ENCODE measurements at regions of chr18 and their contacts with region 1.

Region 1: DNA sequence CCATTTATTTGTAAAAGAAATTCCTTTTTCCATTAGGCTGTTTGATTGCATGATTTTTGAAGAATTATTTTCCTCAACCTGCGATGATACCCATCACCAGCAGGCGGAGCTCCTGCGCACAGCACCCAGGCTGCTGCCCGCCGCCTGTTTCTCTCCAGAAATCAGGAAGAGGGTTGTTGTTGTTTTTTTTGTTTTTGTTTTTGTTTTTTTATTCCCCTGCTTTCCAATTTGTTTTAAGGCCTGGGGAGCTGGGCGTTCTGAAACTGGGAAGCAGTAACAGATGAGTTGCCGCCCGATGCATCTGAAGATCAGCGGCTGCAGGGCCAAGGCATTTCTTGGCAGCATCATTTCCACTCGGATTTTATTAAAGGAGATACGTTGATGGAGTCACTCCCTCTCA is 132.1 kb downstream of the MBP start:
- DNase-seq: peak; percentile 62
- H3K4me3 Mint-ChIP-seq: no peak overlapping the region
- H3K27ac Mint-ChIP-seq: no peak overlapping the region
- H3K4me1 Mint-ChIP-seq: peaks cover 17% of the 10 kb centered on the region
- H3K27me3 Mint-ChIP-seq: no peaks in the 10 kb centered on the region

Region 2: GRCh38 chr18:76658627-76659026 is 341.9 kb before region 1 on chr18:
- CTCF ChIA-PET with region 1: no interaction called
- POLR2A ChIA-PET with region 1: no interaction called
- intact Hi-C with region 1: no loop called
- DNase-seq: peak; percentile 46
- H3K4me3 Mint-ChIP-seq: no peak overlapping the region
- H3K27ac Mint-ChIP-seq: no peak overlapping the region
- H3K4me1 Mint-ChIP-seq: peaks cover 15% of the 10 kb centered on the region
- H3K27me3 Mint-ChIP-seq: peaks cover 34% of the 10 kb centered on the region

Region 3: DNA sequence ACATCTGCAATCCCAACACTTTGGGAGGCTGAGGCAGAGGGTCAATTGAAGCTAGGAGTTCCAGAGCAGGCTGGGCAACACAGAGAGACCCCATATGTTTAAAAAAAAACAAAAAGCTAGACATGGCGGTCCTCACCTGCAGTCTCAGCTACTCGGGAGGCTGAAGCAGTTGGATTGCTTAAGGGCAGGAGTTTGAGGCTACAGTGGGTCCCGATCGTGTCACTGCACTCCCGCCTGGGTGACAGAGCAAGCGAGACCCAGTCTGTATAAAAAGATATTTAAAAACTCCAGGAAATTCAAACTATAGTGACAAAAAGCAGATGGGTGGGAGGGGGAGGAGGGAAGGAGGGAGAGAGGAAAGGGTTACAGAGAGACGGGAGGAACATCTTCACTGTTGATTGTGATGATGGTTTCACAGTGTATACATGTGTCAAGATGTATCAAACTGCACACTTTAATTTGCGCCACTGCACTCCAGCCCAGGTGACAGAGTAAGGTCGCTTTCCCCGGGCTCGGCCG is 179.1 kb before region 1 on chr18:
- CTCF ChIA-PET with region 1: no interaction called
- POLR2A ChIA-PET with region 1: no interaction called
- intact Hi-C with region 1: no loop called
- DNase-seq: no peak
- H3K4me3 Mint-ChIP-seq: peak overlapping the region; percentile 89
- H3K27ac Mint-ChIP-seq: peak overlapping the region; percentile 87
- H3K4me1 Mint-ChIP-seq: peaks cover 46% of the 10 kb centered on the region
- H3K27me3 Mint-ChIP-seq: no peaks in the 10 kb centered on the region

Region 4: DNA sequence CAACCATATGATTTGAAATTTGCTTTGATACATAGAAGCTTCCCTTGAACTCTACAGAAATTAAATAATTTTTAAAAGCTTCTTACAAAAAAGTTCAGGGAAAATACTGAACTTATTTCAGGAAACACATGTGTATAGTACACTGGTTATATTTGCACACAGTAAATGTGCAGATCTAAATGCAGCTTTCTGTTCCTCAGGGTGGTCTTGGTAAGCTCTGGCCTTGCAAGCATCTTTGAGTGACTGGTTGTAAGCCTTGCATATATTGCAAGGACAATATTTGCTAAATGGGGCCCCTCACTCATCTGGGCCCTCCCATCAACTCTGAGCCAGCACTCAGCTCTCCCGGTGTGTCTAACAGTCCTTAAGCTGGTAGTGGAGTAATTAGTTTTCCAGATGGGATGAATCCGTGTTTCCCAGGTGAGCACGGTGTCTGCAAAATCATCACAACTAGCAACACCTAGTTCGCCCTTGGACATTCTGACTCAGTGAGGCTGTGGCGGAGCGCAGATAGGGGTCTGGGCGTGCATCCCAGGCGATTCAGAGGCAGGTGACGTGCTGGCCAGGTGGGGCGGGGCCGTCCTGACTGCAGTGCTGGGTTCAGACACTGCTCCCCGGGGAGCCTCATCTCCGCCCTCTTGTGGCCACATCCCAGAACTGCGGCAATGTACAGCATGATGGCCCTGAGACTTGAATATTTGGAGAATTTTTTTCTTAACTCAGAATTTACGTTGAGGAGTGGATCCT is 17.5 kb before region 1 on chr18:
- CTCF ChIA-PET with region 1: interaction called, 27 read pairs
- POLR2A ChIA-PET with region 1: no interaction called
- intact Hi-C with region 1: no loop called
- DNase-seq: peak; percentile 94
- H3K4me3 Mint-ChIP-seq: no peak overlapping the region
- H3K27ac Mint-ChIP-seq: no peak overlapping the region
- H3K4me1 Mint-ChIP-seq: peaks cover 4% of the 10 kb centered on the region
- H3K27me3 Mint-ChIP-seq: no peaks in the 10 kb centered on the region

Region 5: DNA sequence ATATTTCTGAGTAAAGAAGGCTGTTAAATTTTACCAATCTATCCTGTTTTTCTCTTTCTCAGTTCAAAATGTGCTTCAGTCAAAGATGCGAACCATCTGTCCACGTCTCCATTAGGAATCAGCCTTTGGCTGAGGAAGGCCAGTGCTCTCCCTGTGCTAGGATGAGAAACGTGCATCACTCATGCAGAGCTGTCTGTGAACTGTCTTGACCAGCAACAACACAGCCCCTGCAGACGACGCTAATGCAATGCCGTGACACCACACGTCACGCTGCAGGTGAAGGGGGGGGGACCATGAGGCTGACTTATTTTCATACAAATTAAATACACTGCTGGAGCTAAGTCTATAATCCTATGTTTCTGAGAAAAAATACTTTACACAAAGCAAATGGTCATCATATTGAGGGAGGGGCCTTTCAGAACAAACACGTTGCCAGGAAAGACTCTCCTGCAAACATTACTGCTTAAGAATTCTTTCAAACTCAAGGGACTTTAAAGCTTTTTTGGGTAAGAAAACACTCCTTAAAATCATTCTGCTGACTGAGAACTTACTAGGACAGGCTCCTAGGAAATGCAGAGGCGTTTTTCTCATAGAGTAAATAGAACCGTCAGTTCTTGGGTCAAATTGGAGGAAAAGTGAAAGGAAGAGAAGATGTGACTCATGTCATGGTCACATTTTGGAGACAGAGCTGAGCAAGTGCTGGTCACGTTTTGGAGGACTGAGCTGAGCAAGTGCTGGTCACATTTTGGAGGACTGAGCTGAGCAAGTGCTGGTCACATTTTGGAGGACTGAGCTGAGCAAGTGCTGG is 35.1 kb after region 1 on chr18:
- CTCF ChIA-PET with region 1: interaction called, 19 read pairs
- POLR2A ChIA-PET with region 1: interaction called, 6 read pairs
- intact Hi-C with region 1: no loop called
- DNase-seq: no peak
- H3K4me3 Mint-ChIP-seq: no peak overlapping the region
- H3K27ac Mint-ChIP-seq: peak overlapping the region; percentile 40
- H3K4me1 Mint-ChIP-seq: peaks cover 47% of the 10 kb centered on the region
- H3K27me3 Mint-ChIP-seq: no peaks in the 10 kb centered on the region

Region 6: GRCh38 chr18:77061946-77062517 is 61.5 kb after region 1 on chr18:
- CTCF ChIA-PET with region 1: interaction called, 88 read pairs
- POLR2A ChIA-PET with region 1: no interaction called
- intact Hi-C with region 1: loop called (anchors 2 kb)
- DNase-seq: peak; percentile 62
- H3K4me3 Mint-ChIP-seq: peak overlapping the region; percentile 58
- H3K27ac Mint-ChIP-seq: peak overlapping the region; percentile 100
- H3K4me1 Mint-ChIP-seq: peaks cover 85% of the 10 kb centered on the region
- H3K27me3 Mint-ChIP-seq: no peaks in the 10 kb centered on the region

Region 7: DNA sequence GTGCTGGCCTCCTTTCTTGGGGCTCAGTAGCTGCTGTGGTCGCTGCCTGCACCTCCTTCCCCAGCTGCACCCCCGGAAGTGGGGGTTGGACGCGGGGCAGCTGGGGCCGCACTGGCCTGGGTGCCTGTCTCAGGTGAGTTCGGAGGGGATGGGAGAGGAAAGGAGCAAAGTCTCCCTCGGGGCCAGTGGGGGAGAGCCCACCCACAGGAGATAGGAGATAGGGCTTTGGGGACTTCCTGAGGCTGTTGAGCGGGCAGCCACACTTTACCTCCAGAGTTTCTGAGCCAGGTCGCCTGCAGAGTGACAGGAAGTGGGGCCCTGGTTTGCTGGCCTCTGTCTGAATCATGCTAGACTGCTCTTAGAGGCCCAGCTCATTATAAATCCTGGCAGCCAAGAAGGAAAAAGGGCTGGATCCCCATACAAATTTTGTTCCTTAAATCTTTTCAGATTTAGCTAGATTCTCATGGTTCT is 124.0 kb after region 1 on chr18:
- CTCF ChIA-PET with region 1: interaction called, 13 read pairs
- POLR2A ChIA-PET with region 1: no interaction called
- intact Hi-C with region 1: no loop called
- DNase-seq: peak; percentile 80
- H3K4me3 Mint-ChIP-seq: peak overlapping the region; percentile 75
- H3K27ac Mint-ChIP-seq: peak overlapping the region; percentile 93
- H3K4me1 Mint-ChIP-seq: peaks cover 93% of the 10 kb centered on the region
- H3K27me3 Mint-ChIP-seq: no peaks in the 10 kb centered on the region